ENCODE measurements at regions of chr10 and their contacts with region 1.

Region 1: GRCh38 chr10:101060036-101060950 is 1.5 kb upstream of the KAZALD1 start:
- DNase-seq: peak; percentile 93
- H3K4me3 ChIP-seq: peak overlapping the region; percentile 89
- H3K27ac ChIP-seq: peak overlapping the region; percentile 94
- H3K4me1 ChIP-seq: peaks cover 69% of the 10 kb centered on the region
- CTCF ChIP-seq: peak; percentile 99

Region 2: GRCh38 chr10:100878291-100878910 is 181.9 kb before region 1 on chr10:
- CTCF ChIA-PET with region 1: no interaction called
- POLR2A ChIA-PET with region 1: no interaction called
- intact Hi-C with region 1: no loop called
- DNase-seq: peak; percentile 86
- H3K4me3 ChIP-seq: no peak overlapping the region
- H3K27ac ChIP-seq: no peak overlapping the region
- H3K4me1 ChIP-seq: peaks cover 35% of the 10 kb centered on the region
- CTCF ChIP-seq: peak; percentile 89

Region 3: GRCh38 chr10:100912605-100913469 is 147.5 kb before region 1 on chr10 and contains the start of gene SLF2:
- CTCF ChIA-PET with region 1: no interaction called
- POLR2A ChIA-PET with region 1: interaction called, 3 read pairs
- intact Hi-C with region 1: loop called (anchors 5 kb)
- DNase-seq: peak; percentile 98
- H3K4me3 ChIP-seq: peak within 1 kb of the TSS; percentile 97
- H3K27ac ChIP-seq: peak within 1 kb of the TSS; percentile 75
- H3K4me1 ChIP-seq: peaks cover 54% of the 10 kb centered on the region
- CTCF ChIP-seq: no peak
- total RNA-seq, gene SLF2: 50.9 and 58.2 TPM in 2 replicates

Region 4: GRCh38 chr10:100998991-100999741 is 61.1 kb before region 1 on chr10:
- CTCF ChIA-PET with region 1: no interaction called
- POLR2A ChIA-PET with region 1: no interaction called
- intact Hi-C with region 1: loop called (anchors 2 kb)
- DNase-seq: peak; percentile 80
- H3K4me3 ChIP-seq: peak overlapping the region; percentile 90
- H3K27ac ChIP-seq: peak overlapping the region; percentile 63
- H3K4me1 ChIP-seq: peaks cover 25% of the 10 kb centered on the region
- CTCF ChIP-seq: peak; percentile 86

Region 5: GRCh38 chr10:101141616-101142532 is 81.6 kb after region 1 on chr10:
- CTCF ChIA-PET with region 1: interaction called, 4 read pairs
- POLR2A ChIA-PET with region 1: interaction called, 3 read pairs
- intact Hi-C with region 1: loop called (anchors 5 kb)
- DNase-seq: peak; percentile 85
- H3K4me3 ChIP-seq: no peak overlapping the region
- H3K27ac ChIP-seq: no peak overlapping the region
- H3K4me1 ChIP-seq: no peaks in the 10 kb centered on the region
- CTCF ChIP-seq: peak; percentile 96